CD4-positive, alpha-beta T cell (primary cell): ENCODE measurements at regions of chr14 and their contacts with region 1.

Region 1: GRCh38 chr14:89178802-89179535 is 238.1 kb downstream of the FOXN3 start:
- DNase-seq: no peak
- ATAC-seq: no peak
- H3K4me3 ChIP-seq: no peak overlapping the region
- H3K4me3 Mint-ChIP-seq: no peak overlapping the region
- H3K27ac ChIP-seq: no peak overlapping the region
- H3K27ac Mint-ChIP-seq: peak overlapping the region; percentile 40
- H3K4me1 ChIP-seq: peaks cover 7% of the 10 kb centered on the region
- H3K4me1 Mint-ChIP-seq: peaks cover 35% of the 10 kb centered on the region
- H3K27me3 ChIP-seq: no peaks in the 10 kb centered on the region
- H3K27me3 Mint-ChIP-seq: no peaks in the 10 kb centered on the region
- CTCF ChIP-seq: no peak

Region 2: DNA sequence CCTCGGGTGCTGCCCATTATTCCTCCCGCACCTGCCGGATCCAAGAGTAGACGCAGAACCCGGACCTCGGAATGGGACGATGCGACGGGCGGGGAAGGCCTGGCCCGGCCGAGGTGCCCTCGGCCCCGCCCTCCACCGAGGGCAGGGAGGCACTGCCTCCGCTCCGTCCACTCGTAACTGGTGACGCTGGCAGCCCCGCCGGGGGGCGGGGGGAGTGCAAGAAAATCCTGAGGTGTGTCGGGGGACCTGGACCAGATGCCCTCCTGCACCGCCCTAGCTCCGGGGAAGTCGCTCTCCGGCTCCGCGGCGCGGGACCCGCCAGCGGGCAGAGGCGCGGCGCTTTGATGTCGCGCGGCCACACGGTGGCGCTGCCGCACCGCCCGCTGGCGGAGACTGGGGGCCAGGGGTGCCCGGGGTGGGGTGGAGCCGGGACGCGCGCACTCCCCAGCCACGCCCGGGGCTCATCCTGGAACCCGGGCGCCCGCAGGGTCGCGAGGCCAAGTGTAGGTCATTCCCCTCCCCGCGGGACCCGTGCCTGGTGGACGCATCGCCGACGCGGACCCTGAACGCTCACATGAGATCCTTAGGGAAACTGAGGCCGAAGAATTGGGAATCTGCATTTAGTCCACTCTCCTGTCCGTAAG is 151.8 kb before region 1 on chr14:
- CTCF ChIA-PET with region 1: no interaction called
- POLR2A ChIA-PET with region 1: no interaction called
- intact Hi-C with region 1: loop called in 1 of 2 experiments (anchors 10 kb)
- DNase-seq: peak; percentile 20 to 81 (median 50)
- ATAC-seq: peak; percentile 88
- H3K4me3 ChIP-seq: peak overlapping the region; percentile 51
- H3K4me3 Mint-ChIP-seq: peak overlapping the region; percentile 55
- H3K27ac ChIP-seq: no peak overlapping the region
- H3K27ac Mint-ChIP-seq: no peak overlapping the region
- H3K4me1 ChIP-seq: peaks cover 21% of the 10 kb centered on the region
- H3K4me1 Mint-ChIP-seq: peaks cover 10% of the 10 kb centered on the region
- H3K27me3 ChIP-seq: peaks cover 43 to 56% of the 10 kb centered on the region in 2 experiments
- H3K27me3 Mint-ChIP-seq: peaks cover 80% of the 10 kb centered on the region
- CTCF ChIP-seq: peak; percentile 64

Region 3: DNA sequence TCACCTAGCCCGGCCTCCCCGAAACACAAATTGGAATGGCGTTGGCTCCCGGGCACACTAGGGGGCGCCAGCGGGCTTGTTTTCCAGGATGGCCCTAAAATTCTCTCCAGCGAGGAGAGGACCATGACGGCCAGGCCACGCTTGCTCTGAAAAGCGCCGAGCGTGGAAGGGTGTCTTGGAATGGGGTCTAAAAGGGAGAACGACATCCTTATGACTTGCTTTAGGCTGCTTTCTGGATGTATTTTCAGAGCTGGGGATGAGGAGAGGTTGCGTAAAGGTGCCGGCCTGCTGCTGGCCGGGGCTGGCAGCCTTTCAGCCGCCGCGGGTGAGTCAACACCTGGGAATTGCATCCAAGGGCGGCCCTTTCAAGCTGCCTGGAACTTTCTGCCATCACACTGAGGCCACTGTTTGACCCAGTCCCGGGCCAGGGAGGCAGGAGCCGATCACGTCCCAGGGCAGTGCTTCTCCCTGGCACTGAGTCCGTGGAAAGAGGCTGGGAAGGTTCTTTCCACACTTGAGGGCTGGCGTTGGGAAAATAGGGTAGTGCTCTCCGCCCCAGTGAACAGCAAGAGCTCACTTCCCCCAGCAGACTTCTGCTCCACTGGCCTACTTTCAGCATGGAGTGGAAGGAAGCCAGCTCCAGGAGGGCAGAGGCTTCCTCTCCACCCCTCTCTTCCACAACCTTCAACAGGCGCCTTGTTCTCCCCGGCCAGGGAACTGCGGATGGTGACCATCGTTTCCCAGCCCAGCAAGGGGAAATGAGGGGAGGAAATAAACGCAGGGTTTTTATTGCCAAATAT is 138.3 kb before region 1 on chr14:
- CTCF ChIA-PET with region 1: no interaction called
- POLR2A ChIA-PET with region 1: no interaction called
- intact Hi-C with region 1: loop called in 1 of 2 experiments (anchors 5 kb)
- DNase-seq: peak; percentile 57 to 87 (median 76)
- ATAC-seq: peak; percentile 67
- H3K4me3 ChIP-seq: peak overlapping the region; percentile 49
- H3K4me3 Mint-ChIP-seq: peak overlapping the region; percentile 60
- H3K27ac ChIP-seq: no peak overlapping the region
- H3K27ac Mint-ChIP-seq: no peak overlapping the region
- H3K4me1 ChIP-seq: peaks cover 14% of the 10 kb centered on the region
- H3K4me1 Mint-ChIP-seq: peaks cover 15% of the 10 kb centered on the region
- H3K27me3 ChIP-seq: peaks cover 0 to 3% of the 10 kb centered on the region in 2 experiments
- H3K27me3 Mint-ChIP-seq: peaks cover 45% of the 10 kb centered on the region
- CTCF ChIP-seq: peak; percentile 98

Region 4: GRCh38 chr14:89899917-89900663 is 721.1 kb after region 1 on chr14:
- CTCF ChIA-PET with region 1: no interaction called
- POLR2A ChIA-PET with region 1: no interaction called
- intact Hi-C with region 1: loop called in 1 of 2 experiments (anchors 5 kb)
- DNase-seq: peak in 4 of 14 experiments; percentile 24 to 54 (median 40)
- ATAC-seq: no peak
- H3K4me3 ChIP-seq: no peak overlapping the region
- H3K4me3 Mint-ChIP-seq: no peak overlapping the region
- H3K27ac ChIP-seq: no peak overlapping the region
- H3K27ac Mint-ChIP-seq: no peak overlapping the region
- H3K4me1 ChIP-seq: no peaks in the 10 kb centered on the region
- H3K4me1 Mint-ChIP-seq: peaks cover 16% of the 10 kb centered on the region
- H3K27me3 ChIP-seq: peaks cover 0 to 5% of the 10 kb centered on the region in 2 experiments
- H3K27me3 Mint-ChIP-seq: peaks cover 9% of the 10 kb centered on the region
- CTCF ChIP-seq: peak; percentile 31